Common myeloid progenitor, CD34-positive (primary cell): ENCODE measurements at regions of chr12 and their contacts with region 1.

Region 1: GRCh38 chr12:52295663-52296062 is 4.3 kb upstream of the KRT81 start:
- DNase-seq: peak in 2 of 3 donors; percentile 47 to 57
- H3K4me3 ChIP-seq: no peak overlapping the region
- H3K27ac ChIP-seq: no peak overlapping the region
- H3K4me1 ChIP-seq: peaks cover 0 to 10% (median 0%) of the 10 kb centered on the region in 4 experiments
- H3K27me3 ChIP-seq: peaks cover 0 to 8% (median 2%) of the 10 kb centered on the region in 5 experiments

Region 2: DNA sequence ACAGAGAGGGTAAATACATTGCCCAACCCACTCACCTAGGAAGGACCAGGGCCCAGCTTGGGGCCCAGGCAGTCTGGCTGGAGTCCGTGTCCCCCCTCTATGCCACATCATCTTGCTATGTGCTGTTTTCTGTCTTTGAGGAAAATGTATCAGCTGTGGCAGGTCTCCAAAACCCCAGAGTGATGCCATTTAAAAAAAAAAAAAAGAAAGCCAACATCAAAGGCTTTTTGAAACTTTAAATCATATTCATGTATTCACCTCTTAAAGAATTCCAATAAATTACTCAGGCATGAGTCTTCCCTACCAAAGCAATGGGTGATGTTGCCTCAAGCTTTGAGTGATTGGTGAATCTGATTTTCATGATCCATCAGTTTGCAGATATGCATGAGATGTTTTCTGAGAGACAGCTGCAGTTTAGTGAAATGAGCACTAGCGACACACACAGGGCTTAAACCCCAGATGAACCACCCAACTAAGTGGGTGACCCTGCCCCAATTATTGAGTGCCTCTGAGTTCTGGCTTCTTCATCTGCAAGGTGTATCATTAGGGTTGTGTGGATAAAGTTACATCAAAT is 10.4 kb before region 1 on chr12:
- CTCF ChIA-PET with region 1: interaction called, 32 read pairs
- POLR2A ChIA-PET with region 1: no interaction called
- DNase-seq: no peak
- H3K4me3 ChIP-seq: no peak overlapping the region
- H3K27ac ChIP-seq: no peak overlapping the region
- H3K4me1 ChIP-seq: peaks cover 0 to 14% (median 11%) of the 10 kb centered on the region in 4 experiments
- H3K27me3 ChIP-seq: peaks cover 0 to under 1% (median 0%) of the 10 kb centered on the region in 5 experiments

Region 3: DNA sequence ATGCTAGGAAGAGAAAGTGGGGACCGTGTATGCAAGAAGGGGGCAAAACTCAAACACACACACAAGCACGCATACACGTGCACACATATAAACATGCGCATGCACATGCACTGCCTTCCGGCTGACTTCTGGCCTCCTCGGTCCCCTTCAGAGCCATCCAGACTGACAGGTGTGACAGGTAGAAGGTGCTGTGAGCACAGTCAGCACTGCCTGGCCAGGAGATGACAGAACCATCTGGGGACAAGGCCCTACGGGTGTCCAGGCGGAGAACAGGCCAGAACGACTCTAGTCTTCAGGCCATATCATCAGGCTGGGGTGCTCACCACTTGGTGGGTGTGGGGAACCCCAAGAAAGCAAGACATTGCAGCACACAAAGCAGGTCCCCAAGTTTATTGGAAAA is 18.3 kb after region 1 on chr12:
- CTCF ChIA-PET with region 1: interaction called, 10 read pairs
- POLR2A ChIA-PET with region 1: no interaction called
- DNase-seq: no peak
- H3K4me3 ChIP-seq: no peak overlapping the region
- H3K27ac ChIP-seq: no peak overlapping the region
- H3K4me1 ChIP-seq: peaks cover 0 to under 1% (median 0%) of the 10 kb centered on the region in 4 experiments
- H3K27me3 ChIP-seq: peaks cover 0 to 40% (median 18%) of the 10 kb centered on the region in 5 experiments